H1 (cell line): ENCODE measurements at regions of chr14 and their contacts with region 1.

Region 1: DNA sequence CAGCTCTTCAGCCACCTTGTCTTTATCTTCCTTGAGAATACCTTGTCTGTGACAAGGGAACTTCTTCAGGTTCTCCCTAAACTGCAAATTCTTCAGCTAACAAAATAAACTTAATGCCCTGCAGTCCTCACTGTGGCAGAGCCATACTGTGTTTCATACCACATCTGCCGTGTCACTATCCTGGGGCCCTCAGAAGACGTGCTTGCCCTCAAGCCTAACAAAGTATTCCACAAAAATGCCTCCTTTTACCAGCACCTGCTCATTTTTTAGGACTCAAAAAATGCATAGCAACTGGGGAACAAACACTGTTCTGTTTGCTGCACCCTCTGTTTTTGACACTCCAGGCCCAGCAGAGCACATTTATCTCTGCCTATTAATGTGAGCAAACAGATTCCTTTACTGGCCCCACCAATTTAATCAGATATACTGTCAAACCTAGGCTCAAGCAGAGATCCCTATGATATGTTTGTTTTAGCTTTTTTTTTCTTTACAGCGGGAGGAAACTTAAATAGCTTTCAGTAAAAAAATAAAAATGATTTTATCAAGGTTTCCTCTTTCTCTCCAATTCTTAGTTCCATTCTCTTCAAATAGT is 270.7 kb upstream of the SSTR1 start:
- DNase-seq: no peak
- H3K4me3 ChIP-seq: no peak overlapping the region
- H3K27ac ChIP-seq: no peak overlapping the region
- H3K4me1 ChIP-seq: no peaks in the 10 kb centered on the region
- H3K27me3 ChIP-seq: no peaks in the 10 kb centered on the region
- CTCF ChIP-seq: no peak
- EP300 ChIP-seq: no peak
- POLR2A ChIP-seq: no peak
- RAD21 ChIP-seq: no peak

Region 2: DNA sequence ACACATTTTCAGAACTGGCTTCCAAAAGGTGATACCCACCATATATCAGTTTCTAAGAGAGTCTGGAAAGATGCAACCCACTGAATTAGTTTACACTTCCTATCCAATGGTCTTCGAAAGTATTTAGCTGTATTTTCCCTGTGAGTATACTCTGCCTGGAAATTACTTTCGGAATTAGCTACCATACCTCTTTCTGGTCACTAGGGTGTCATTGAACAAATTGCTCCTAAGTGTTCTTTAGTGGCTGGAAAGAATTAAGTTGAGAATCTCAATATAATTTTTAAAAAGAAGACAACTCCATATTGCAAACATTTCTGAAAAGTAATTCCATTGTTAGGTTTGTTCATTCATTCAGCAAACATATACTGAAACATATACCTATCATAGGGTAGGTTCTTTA is 12.4 kb before region 1 on chr14:
- CTCF ChIA-PET with region 1: interaction called, 11 read pairs
- POLR2A ChIA-PET with region 1: no interaction called
- DNase-seq: no peak
- H3K4me3 ChIP-seq: no peak overlapping the region
- H3K27ac ChIP-seq: no peak overlapping the region
- H3K4me1 ChIP-seq: no peaks in the 10 kb centered on the region
- H3K27me3 ChIP-seq: no peaks in the 10 kb centered on the region
- CTCF ChIP-seq: peak in 1 of 3 experiments; percentile 26; a peak in 2 of 4 replicates
- EP300 ChIP-seq: no peak
- POLR2A ChIP-seq: no peak
- RAD21 ChIP-seq: no peak